Activated CD4-positive, alpha-beta T cell treated with anti-CD3 and anti-CD28 coated beads for 36 hours (primary cell): ENCODE measurements at regions of chr7 and their contacts with region 1.

Region 1: GRCh38 chr7:2978403-2978802 is 65.3 kb downstream of the CARD11 start:
- DNase-seq: peak; percentile 98
- ATAC-seq: peak; percentile 91
- H3K4me3 Mint-ChIP-seq: peak overlapping the region; percentile 74
- H3K27ac Mint-ChIP-seq: peak overlapping the region; percentile 94
- H3K4me1 Mint-ChIP-seq: peaks cover 75% of the 10 kb centered on the region
- H3K27me3 Mint-ChIP-seq: no peaks in the 10 kb centered on the region

Region 2: GRCh38 chr7:2894118-2894940 is 84.1 kb before region 1 on chr7:
- CTCF ChIA-PET with region 1: no interaction called
- POLR2A ChIA-PET with region 1: interaction called, 3 read pairs
- intact Hi-C with region 1: loop called (anchors 1 kb)
- DNase-seq: peak; percentile 83
- ATAC-seq: peak; percentile 89
- H3K4me3 Mint-ChIP-seq: peak overlapping the region; percentile 69
- H3K27ac Mint-ChIP-seq: peak overlapping the region; percentile 98
- H3K4me1 Mint-ChIP-seq: peaks cover 29% of the 10 kb centered on the region
- H3K27me3 Mint-ChIP-seq: no peaks in the 10 kb centered on the region

Region 3: DNA sequence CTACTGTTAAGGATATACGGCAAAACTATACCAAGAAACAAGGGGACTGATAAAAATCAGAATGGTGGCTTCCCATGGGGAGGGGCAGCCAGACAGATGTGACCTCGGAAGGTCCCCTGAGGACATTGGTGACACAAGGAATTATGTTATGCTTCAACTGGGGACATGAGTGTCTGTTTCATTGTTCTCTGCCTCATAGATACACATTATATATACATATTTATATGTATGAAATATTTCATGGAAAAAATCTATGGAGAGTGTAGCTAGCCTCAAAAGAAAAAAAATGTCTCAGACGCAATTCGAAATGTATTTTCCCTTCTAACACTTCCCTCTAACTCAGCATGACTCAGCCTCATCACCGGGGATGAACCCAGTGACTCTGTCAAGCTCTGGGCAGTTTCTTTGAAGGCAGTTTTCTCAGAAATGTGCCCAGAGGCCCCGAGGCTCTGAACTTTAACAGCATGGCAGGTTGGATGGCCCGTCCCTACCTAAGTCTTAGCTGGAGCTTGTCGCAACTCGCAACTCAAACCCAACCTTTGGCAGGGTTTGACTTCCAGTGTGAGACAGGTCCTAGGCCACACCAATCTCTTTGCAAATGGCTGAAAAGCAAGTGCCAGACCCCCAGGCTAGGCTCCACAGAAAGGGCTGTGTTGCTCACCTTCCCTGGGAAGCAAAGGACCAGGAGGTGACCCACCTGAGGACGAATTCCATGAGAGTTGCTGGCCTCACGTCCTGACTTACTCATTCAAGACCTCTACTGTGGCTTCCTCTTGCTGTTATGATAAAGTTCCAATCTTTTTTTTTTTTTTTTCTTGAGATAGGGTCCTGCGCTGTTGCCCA is 21.7 kb before region 1 on chr7:
- CTCF ChIA-PET with region 1: interaction called, 4 read pairs
- POLR2A ChIA-PET with region 1: no interaction called
- intact Hi-C with region 1: loop called (anchors 1 to 2 kb)
- DNase-seq: peak; percentile 80
- ATAC-seq: peak; percentile 86
- H3K4me3 Mint-ChIP-seq: peak overlapping the region; percentile 38
- H3K27ac Mint-ChIP-seq: peak overlapping the region; percentile 83
- H3K4me1 Mint-ChIP-seq: peaks cover 73% of the 10 kb centered on the region
- H3K27me3 Mint-ChIP-seq: no peaks in the 10 kb centered on the region

Region 4: DNA sequence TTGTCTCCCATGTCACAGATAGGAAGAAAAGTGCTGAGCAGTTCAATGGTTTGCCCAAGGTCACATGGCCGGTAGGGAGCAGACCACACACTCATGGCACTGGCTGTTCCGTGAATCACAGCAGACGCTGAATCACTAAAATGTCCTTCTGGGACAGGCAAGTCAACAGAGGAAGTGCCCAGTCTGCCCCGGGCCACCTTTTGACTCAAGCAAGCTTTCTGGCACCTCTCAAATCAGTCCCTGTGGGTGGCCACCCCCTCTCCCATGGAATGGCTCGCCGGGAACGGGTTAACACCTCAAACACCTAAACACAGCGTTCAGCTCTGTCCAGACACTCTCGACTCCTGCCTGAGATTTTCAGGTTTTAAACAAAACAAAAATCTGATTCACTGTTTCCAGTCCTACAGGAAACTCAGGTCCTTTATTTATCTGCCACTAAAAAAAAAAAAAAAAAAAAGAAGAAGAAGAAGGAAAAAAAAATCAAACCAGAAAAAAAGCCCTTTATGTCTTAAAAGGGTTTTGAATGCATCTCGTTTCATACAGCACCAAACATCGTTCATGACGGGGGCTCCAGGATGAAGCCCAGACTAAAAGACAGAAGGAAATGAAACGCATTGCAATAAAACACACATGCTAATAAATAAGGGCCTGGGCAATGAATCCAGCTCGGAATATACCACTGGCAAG is 49.8 kb after region 1 on chr7:
- CTCF ChIA-PET with region 1: no interaction called
- POLR2A ChIA-PET with region 1: interaction called, 4 read pairs
- intact Hi-C with region 1: loop called (anchors 1 to 5 kb)
- DNase-seq: peak; percentile 84
- ATAC-seq: peak; percentile 95
- H3K4me3 Mint-ChIP-seq: peak overlapping the region; percentile 47
- H3K27ac Mint-ChIP-seq: peak overlapping the region; percentile 84
- H3K4me1 Mint-ChIP-seq: peaks cover 51% of the 10 kb centered on the region
- H3K27me3 Mint-ChIP-seq: no peaks in the 10 kb centered on the region

Region 5: GRCh38 chr7:3092468-3092867 is 114.1 kb after region 1 on chr7:
- CTCF ChIA-PET with region 1: interaction called, 4 read pairs
- POLR2A ChIA-PET with region 1: no interaction called
- intact Hi-C with region 1: loop called in 1 of 2 experiments (anchors 2 kb)
- DNase-seq: peak; percentile 88
- ATAC-seq: peak; percentile 86
- H3K4me3 Mint-ChIP-seq: peak overlapping the region; percentile 32
- H3K27ac Mint-ChIP-seq: peak overlapping the region; percentile 89
- H3K4me1 Mint-ChIP-seq: peaks cover 67% of the 10 kb centered on the region
- H3K27me3 Mint-ChIP-seq: no peaks in the 10 kb centered on the region

Region 6: GRCh38 chr7:3427957-3428356 is 449.6 kb after region 1 on chr7:
- CTCF ChIA-PET with region 1: no interaction called
- POLR2A ChIA-PET with region 1: no interaction called
- intact Hi-C with region 1: no loop called
- DNase-seq: peak; percentile 16
- ATAC-seq: peak; percentile 86
- H3K4me3 Mint-ChIP-seq: no peak overlapping the region
- H3K27ac Mint-ChIP-seq: no peak overlapping the region
- H3K4me1 Mint-ChIP-seq: peaks cover 11% of the 10 kb centered on the region
- H3K27me3 Mint-ChIP-seq: peaks cover 2% of the 10 kb centered on the region